Right cardiac atrium (tissue), 5 donors: ENCODE measurements at regions of chrX and their contacts with region 1.

Region 1: GRCh38 chrX:17046478-17047097 is 100.1 kb downstream of the REPS2 start:
- DNase-seq: peak in 2 of 3 donors; percentile 36 to 60
- ATAC-seq: peak; percentile 55 to 69
- H3K4me3 ChIP-seq: no peak overlapping the region
- H3K27ac ChIP-seq: no peak overlapping the region
- H3K4me1 ChIP-seq: no peaks in the 10 kb centered on the region
- H3K27me3 ChIP-seq: no peaks in the 10 kb centered on the region

Region 2: DNA sequence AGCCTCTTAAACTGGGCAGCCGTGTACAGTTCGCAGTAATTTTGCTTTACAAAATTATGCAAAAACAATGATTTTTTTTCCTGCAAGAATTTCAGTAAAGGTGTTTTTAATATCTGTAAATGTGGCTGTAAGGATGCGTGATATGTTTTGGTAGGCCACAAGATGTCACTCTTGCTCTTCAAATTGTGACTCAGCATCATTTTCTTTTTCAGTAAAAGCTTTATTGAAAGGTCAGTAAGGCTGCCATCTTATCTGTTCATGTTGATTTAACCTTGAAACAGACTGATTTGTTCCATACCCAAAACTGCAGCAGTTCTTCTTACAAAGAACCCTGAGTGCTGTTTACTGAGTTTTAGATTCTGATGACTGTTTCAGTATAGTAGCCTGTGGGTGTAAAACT is 220.4 kb before region 1 on chrX:
- intact Hi-C with region 1: loop called in 1 of 4 experiments (anchors 10 kb)
- DNase-seq: no peak
- ATAC-seq: peak; percentile 11 to 50
- H3K4me3 ChIP-seq: no peak overlapping the region
- H3K27ac ChIP-seq: no peak overlapping the region
- H3K4me1 ChIP-seq: no peaks in the 10 kb centered on the region
- H3K27me3 ChIP-seq: no peaks in the 10 kb centered on the region

Region 3: GRCh38 chrX:16892504-16893362 is 153.9 kb before region 1 on chrX:
- intact Hi-C with region 1: loop called in 1 of 4 experiments (anchors 10 kb)
- DNase-seq: peak; percentile 57 to 76 (median 59)
- ATAC-seq: peak; percentile 66 to 77
- H3K4me3 ChIP-seq: no peak overlapping the region
- H3K27ac ChIP-seq: no peak overlapping the region
- H3K4me1 ChIP-seq: no peaks in the 10 kb centered on the region
- H3K27me3 ChIP-seq: no peaks in the 10 kb centered on the region

Region 4: DNA sequence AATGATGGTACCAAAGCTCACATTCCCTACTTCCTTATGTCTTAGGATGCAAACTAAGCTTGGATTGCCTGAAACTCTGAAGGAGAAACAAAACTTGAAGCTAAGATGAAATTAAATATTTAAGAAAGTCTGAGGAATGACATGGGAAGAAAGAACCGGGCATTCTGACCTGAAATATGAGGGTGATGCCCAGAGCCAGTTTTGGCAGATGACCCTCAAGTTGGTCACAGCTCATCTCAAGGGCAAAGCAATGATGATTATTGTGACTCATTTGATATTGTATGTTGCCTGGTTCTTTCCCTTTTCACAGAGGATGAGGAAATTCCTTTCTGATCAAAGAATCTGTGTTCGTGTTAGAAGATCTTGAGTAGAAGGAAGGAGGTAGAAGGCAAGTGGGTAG is 232.4 kb after region 1 on chrX:
- intact Hi-C with region 1: no loop called
- DNase-seq: no peak
- ATAC-seq: no peak
- H3K4me3 ChIP-seq: no peak overlapping the region
- H3K27ac ChIP-seq: no peak overlapping the region
- H3K4me1 ChIP-seq: no peaks in the 10 kb centered on the region
- H3K27me3 ChIP-seq: no peaks in the 10 kb centered on the region